Pancreas (tissue), 10 donors: ENCODE measurements at regions of chr14 and their contacts with region 1.

Region 1: DNA sequence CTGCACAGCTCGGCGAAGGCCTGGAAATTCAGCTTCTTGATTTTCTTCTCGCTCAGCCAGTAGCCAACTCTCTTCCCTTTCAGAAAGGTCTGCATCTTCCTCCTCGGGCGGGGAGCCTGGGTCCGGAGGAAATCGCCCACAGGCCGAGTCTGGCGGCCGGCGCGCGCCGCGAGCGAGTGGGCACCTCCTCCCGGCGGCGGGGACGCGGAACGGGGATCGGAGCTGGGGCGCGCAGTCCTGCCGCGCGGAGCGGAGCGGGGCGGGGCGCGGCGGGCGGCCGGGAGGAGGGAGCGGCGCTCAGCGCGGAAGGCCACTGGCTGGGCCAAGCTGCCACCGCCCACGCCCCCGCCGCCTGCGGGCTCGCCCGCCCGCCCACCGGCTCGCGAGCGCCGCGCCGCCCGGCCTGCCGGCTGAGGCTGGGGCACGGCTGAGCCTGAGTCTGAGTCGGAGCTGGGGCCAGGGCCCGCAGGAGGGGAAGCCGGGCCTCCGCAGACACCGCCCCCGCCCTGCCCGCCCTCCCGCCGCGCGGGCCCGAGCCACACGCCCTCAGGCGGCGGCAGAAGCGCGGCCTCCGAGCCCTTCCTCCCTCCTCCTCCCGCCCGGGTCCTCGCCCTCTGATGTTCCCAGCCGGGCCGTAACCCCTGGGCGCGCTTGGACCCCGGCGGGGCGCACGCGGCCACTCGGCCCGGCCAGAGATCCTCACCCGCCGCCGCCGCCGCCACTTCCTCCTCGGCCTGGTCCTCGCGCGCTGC is 480 bp downstream of the ITPK1 start:
- DNase-seq: peak; percentile 89 to 95 (median 90)
- ATAC-seq: peak; percentile 81 to 90 (median 88)
- H3K4me3 ChIP-seq: peak overlapping the region; percentile 83 to 92 (median 88)
- H3K27ac ChIP-seq: peak overlapping the region; percentile 81 to 98 (median 93)
- H3K4me1 ChIP-seq: peaks cover 6 to 23% (median 7%) of the 10 kb centered on the region in 3 donors
- H3K27me3 ChIP-seq: no peaks in the 10 kb centered on the region
- CTCF ChIP-seq: no peak

Region 2: GRCh38 chr14:93219103-93219726 is 104.0 kb after region 1 on chr14:
- intact Hi-C with region 1: loop called in 1 of 3 experiments (anchors 10 kb)
- DNase-seq: peak in 3 of 6 donors; percentile 44 to 64 (median 46)
- ATAC-seq: peak; percentile 72 to 95 (median 92)
- H3K4me3 ChIP-seq: no peak overlapping the region
- H3K27ac ChIP-seq: no peak overlapping the region
- H3K4me1 ChIP-seq: peaks cover 0 to 8% (median under 1%) of the 10 kb centered on the region in 3 donors
- H3K27me3 ChIP-seq: no peaks in the 10 kb centered on the region
- CTCF ChIP-seq: peak; percentile 10 to 48 (median 30)